ENCODE measurements at regions of chr3 and their contacts with region 1.

Region 1: DNA sequence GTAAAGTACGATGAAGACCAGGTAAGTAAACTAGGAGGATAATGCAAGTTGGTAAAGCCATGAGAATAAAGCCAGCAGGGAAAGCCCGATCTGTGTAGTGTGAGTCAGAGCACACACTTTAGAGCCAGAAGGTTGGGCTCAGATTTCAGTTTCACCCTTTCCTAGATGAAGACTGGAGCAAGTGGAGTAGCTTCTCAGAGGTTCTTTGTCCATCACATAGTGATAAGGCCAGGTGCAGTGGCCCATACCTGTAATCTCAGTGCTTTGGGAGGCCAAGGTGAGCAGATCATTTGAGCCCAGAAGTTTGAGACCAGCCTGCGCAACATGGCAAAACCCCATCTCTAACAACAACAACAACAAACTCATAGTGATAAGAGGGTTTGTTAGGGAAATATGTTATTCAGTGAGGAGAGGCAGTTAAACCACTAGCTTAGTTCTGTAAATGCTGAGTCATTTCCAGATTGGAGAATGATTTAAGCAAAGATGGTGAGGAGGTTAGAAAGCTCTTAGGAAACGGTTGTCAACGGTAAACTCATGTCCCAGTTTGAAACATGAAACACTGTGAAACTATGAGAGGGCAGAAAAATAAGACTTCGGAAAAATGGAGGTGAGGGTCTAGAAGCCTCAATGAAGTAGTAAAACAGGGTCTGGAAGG is 39.0 kb downstream of the IL12A start:
- DNase-seq: peak; percentile 26
- H3K4me3 ChIP-seq: no peak overlapping the region
- CTCF ChIP-seq: no peak

Region 2: GRCh38 chr3:159293493-159293892 is 734.2 kb before region 1 on chr3:
- CTCF ChIA-PET with region 1: no interaction called
- POLR2A ChIA-PET with region 1: no interaction called
- DNase-seq: no peak
- H3K4me3 ChIP-seq: no peak overlapping the region
- CTCF ChIP-seq: no peak

Region 3: GRCh38 chr3:160044121-160044520 is 16.5 kb after region 1 on chr3:
- CTCF ChIA-PET with region 1: interaction called, 21 read pairs
- POLR2A ChIA-PET with region 1: no interaction called
- DNase-seq: no peak
- H3K4me3 ChIP-seq: no peak overlapping the region
- CTCF ChIP-seq: no peak

Region 4: GRCh38 chr3:160052385-160053047 is 24.8 kb after region 1 on chr3:
- CTCF ChIA-PET with region 1: interaction called, 21 read pairs
- POLR2A ChIA-PET with region 1: no interaction called
- DNase-seq: no peak
- H3K4me3 ChIP-seq: no peak overlapping the region
- CTCF ChIP-seq: no peak

Region 5: DNA sequence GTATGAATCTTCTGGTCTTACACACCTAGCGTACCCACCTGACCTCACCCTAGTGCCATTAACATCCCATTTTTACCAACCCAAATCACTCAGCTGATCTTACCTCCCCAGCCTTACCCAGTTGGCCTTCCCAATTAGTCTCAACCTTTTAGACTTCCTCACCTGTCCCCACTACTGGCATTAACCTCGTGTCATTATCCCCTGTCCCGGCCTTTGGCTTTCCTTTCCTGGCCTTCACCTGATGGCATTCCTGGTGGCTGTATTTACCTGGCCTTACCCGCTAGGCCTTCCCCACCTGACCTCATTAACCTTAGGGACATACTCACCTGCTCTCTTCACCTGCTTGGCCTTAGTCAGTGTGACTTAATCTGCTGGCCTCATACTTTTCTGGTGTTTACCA is 65.1 kb after region 1 on chr3:
- CTCF ChIA-PET with region 1: no interaction called
- POLR2A ChIA-PET with region 1: no interaction called
- DNase-seq: no peak
- H3K4me3 ChIP-seq: no peak overlapping the region
- CTCF ChIP-seq: no peak

Region 6: DNA sequence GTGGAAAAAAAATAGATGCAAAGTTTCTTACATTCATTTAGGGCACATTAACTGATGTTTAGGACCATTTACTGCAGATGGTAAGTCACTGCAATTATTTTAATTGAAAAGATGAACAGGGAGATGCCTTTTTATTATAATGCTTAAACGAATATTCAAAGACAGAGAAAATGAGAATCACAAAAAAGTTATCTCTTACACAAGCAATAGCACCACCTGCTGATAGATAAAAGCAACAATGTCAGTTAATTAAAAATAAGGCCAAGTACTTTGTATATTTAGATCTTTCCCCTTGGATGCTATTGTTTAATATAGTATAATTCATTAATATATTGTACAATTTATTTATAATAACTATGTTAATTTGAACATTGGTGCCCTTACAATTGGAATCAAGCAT is 315.5 kb after region 1 on chr3:
- CTCF ChIA-PET with region 1: interaction called, 29 read pairs
- POLR2A ChIA-PET with region 1: no interaction called
- DNase-seq: no peak
- H3K4me3 ChIP-seq: no peak overlapping the region
- CTCF ChIP-seq: no peak